SK-N-SH (cell line): ENCODE measurements at regions of chr13 and their contacts with region 1.

Region 1: DNA sequence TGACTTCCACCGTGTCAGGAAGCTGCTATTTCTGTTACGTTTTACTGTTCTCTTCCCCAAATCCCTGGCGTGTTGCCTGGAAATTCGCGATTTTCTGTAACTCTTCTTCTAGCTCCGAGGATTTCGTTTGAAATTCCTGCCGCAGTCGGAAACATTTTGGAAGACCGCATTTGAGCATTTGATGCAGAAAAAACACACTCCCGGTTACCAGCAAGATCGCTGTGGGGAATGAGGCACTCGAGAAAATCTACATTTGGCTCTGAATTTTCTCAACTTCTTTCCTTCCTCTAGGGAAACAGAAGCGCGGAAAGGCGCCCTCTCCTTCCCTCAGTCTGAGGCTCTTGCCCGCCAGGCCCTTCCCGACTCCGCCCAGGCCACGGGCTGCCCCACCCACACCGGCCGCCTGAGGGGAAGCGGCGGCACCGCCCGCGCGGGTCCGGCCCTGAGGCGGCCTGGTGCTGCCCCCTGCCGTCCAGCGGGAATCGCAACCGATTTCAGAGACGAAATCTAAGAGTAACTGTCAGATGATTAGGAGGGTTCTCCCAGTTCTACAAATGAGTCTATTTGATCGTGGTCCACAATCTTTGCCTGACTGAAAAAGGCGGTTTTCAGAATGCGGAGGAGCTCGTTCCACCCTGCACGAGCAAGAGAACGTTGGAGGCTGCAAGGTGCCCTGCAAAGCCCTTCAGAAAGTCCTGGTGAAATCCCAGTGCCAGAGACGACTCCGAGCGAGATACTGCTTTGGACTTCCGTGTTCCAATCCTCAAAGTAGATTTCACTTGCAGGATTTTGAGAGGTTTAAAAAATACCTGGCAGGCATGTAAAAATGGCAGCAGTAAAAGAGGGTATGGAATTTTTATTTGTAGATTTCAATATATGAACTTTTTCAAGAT is 18.4 kb upstream of the TUBGCP3 start:
- DNase-seq: peak; percentile 94
- H3K4me3 ChIP-seq: peak overlapping the region; percentile 55 to 61
- H3K27ac ChIP-seq: no peak overlapping the region; a peak in 1 of 4 replicates
- H3K4me1 ChIP-seq: no peaks in the 10 kb centered on the region; a peak in 1 of 4 replicates
- H3K27me3 ChIP-seq: no peaks in the 10 kb centered on the region; the same call in 1 of the 2 replicates
- CTCF ChIP-seq: peak; percentile 95
- EP300 ChIP-seq: no peak
- RAD21 ChIP-seq: peak; percentile 93

Region 2: DNA sequence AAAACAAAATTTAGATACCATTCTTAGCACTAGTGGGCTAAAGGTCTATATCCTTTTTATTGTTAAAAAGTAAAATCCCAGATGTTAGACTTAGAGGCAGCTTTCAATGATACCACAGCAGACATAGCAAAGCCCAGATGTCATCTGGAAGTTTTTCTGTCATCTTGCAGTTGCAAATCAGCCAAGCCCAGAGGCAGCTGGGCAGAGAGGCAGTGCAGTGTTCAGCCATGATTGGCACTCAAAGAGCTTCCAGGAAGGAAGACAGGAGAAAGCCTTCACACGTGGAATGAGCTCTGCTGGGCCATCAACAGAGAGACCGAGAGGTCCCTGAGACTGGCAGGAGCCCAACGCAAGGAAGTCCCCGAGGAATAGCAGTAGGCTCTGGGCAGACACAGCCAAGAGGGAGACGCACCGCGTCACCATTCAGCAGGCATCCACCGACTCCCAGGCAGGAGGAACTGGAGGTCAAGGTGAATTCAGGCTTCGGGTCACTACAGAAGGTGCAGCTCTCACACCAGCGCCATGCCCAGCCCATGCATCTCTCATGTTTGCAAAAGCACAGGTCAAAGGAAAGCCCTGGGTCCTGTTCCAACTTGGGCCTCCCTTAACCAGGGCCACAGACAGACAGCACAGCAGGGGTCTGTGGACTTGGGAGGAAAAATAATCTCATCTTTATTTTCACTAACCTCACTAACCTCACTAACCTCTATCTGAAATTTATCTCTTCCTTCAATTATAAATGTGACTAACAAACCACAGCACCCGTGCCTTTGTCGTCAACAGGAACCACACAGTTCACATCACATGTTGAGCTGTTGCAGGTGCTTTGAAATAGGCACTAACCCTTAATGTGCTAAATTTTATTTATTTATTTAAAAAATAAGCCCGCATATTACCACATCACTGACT is 73.3 kb before region 1 on chr13:
- CTCF ChIA-PET with region 1: interaction called, 11 read pairs
- POLR2A ChIA-PET with region 1: no interaction called
- DNase-seq: peak; percentile 55
- H3K4me3 ChIP-seq: no peak overlapping the region
- H3K27ac ChIP-seq: peak overlapping the region in 1 of 2 experiments; percentile 98; a peak in 2 of 4 replicates
- H3K4me1 ChIP-seq: peaks cover 0 to 39% of the 10 kb centered on the region in 2 experiments; a peak in 2 of 4 replicates
- H3K27me3 ChIP-seq: no peaks in the 10 kb centered on the region
- CTCF ChIP-seq: no peak
- EP300 ChIP-seq: peak in 1 of 2 experiments; percentile 54; a peak in 1 of 4 replicates
- RAD21 ChIP-seq: no peak; the same call in 1 of the 2 replicates

Region 3: GRCh38 chr13:112616586-112617362 is 10.4 kb after region 1 on chr13:
- CTCF ChIA-PET with region 1: interaction called, 11 read pairs
- POLR2A ChIA-PET with region 1: no interaction called
- DNase-seq: peak; percentile 69
- H3K4me3 ChIP-seq: no peak overlapping the region
- H3K27ac ChIP-seq: no peak overlapping the region
- H3K4me1 ChIP-seq: no peaks in the 10 kb centered on the region
- H3K27me3 ChIP-seq: peaks cover 10% of the 10 kb centered on the region; the same call in 1 of the 2 replicates
- CTCF ChIP-seq: peak; percentile 66
- EP300 ChIP-seq: no peak
- RAD21 ChIP-seq: peak; percentile 62